ENCODE measurements at regions of chr6 and their contacts with region 1.

Region 1: GRCh38 chr6:145963216-145964068 is 716 bp downstream of the SHPRH start:
- DNase-seq: peak in 1 of 5 donors; percentile 58
- ATAC-seq: peak; percentile 24 to 63 (median 52)
- H3K4me3 ChIP-seq: peak overlapping the region; percentile 67 to 96 (median 80)
- H3K27ac ChIP-seq: peak overlapping the region; percentile 70 to 92 (median 88)
- H3K4me1 ChIP-seq: peaks cover 0 to 44% (median 30%) of the 10 kb centered on the region in 12 donors
- H3K27me3 ChIP-seq: no peaks in the 10 kb centered on the region
- CTCF ChIP-seq: no peak
- POLR2A ChIP-seq: no peak

Region 2: GRCh38 chr6:145734486-145735355 is 228.7 kb before region 1 on chr6:
- intact Hi-C with region 1: loop called in 2 of 10 experiments (anchors 5 to 10 kb)
- DNase-seq: peak; percentile 91 to 95 (median 94)
- ATAC-seq: peak; percentile 84 to 97 (median 92)
- H3K4me3 ChIP-seq: peak overlapping the region; percentile 43 to 87 (median 72)
- H3K27ac ChIP-seq: peak overlapping the region; percentile 90 to 99 (median 96)
- H3K4me1 ChIP-seq: peaks cover 0 to 38% (median 14%) of the 10 kb centered on the region in 12 donors
- H3K27me3 ChIP-seq: no peaks in the 10 kb centered on the region
- CTCF ChIP-seq: peak in 2 of 12 donors; percentile 3 to 8
- POLR2A ChIP-seq: peak in 1 of 2 donors; percentile 67

Region 3: DNA sequence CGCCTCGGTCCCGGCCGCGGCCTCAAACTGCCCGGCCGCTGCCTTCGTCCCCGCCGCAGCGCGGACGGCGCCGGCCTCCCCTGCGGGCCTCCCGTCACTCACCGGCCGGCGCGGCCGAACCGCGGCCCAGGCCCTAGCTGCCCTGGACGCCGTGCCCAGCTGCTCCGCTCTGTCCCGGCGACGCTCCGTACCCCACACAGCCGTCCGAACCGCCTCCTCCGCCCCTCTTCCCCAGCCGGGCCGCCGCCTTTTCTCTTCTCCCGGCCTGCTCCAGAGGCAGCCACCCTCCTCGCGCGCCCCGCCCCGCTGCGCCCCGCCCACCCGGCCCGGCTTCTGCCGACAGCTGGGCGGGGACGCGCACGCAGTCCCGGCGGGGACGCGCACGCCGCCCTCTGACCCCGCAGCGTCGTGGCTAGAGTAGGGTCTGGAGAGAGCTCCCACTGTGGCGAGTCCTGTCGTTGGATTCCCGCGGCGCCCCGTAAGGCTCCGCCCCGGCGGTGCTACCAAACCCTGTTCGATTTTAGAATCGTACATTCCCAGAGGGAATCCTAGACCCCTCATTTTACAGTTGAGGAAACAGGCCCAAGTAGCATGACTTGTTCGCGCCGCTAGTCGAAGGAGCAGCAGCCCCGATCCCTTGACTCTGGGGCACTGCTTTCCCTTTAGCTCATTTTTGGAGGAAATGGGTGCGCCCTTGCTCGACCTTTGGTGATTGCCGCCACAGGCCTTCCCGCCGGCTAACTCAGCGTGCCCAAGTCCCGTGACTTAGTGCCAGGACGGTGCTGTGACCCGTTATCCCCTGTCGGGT is 148.7 kb before region 1 on chr6 and contains the start of gene FBXO30:
- intact Hi-C with region 1: loop called in 4 of 10 experiments (anchors 5 to 10 kb)
- DNase-seq: peak; percentile 88 to 94 (median 90)
- ATAC-seq: peak; percentile 91 to 98 (median 97)
- H3K4me3 ChIP-seq: peak within 1 kb of the TSS; percentile 50 to 82 (median 72)
- H3K27ac ChIP-seq: peak within 1 kb of the TSS; percentile 87 to 97 (median 94)
- H3K4me1 ChIP-seq: peaks cover 0 to 58% (median 40%) of the 10 kb centered on the region in 12 donors
- H3K27me3 ChIP-seq: no peaks in the 10 kb centered on the region
- CTCF ChIP-seq: peak in 3 of 12 donors; percentile 7 to 26 (median 9)
- POLR2A ChIP-seq: peak; percentile 26 to 91
- total RNA-seq, gene FBXO30: 9.0 to 17.1 (median 14.4) TPM

Region 4: DNA sequence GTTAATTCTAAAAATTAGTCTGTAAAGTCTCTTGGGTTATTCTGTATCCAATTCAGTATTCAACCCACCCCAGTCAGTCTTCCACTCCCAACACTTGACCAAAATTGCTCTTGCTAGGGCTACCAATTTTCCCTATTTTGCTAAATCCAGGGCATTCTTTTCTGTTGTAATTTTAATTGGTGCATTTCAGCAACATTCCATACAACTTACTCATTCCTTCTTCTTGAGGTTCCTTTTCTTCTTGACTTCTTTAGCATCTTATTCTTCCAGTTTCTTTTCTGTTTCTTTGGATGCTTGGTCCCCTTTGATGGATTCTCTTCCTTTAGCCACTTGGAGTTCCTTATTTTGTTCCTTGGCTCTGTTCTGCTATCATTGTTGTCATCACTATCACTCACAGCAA is 54.2 kb after region 1 on chr6:
- intact Hi-C with region 1: no loop called
- DNase-seq: no peak
- ATAC-seq: no peak
- H3K4me3 ChIP-seq: no peak overlapping the region
- H3K27ac ChIP-seq: no peak overlapping the region
- H3K4me1 ChIP-seq: no peaks in the 10 kb centered on the region
- H3K27me3 ChIP-seq: peaks cover 0 to 2% (median 0%) of the 10 kb centered on the region in 9 donors
- CTCF ChIP-seq: no peak
- POLR2A ChIP-seq: no peak

Region 5: DNA sequence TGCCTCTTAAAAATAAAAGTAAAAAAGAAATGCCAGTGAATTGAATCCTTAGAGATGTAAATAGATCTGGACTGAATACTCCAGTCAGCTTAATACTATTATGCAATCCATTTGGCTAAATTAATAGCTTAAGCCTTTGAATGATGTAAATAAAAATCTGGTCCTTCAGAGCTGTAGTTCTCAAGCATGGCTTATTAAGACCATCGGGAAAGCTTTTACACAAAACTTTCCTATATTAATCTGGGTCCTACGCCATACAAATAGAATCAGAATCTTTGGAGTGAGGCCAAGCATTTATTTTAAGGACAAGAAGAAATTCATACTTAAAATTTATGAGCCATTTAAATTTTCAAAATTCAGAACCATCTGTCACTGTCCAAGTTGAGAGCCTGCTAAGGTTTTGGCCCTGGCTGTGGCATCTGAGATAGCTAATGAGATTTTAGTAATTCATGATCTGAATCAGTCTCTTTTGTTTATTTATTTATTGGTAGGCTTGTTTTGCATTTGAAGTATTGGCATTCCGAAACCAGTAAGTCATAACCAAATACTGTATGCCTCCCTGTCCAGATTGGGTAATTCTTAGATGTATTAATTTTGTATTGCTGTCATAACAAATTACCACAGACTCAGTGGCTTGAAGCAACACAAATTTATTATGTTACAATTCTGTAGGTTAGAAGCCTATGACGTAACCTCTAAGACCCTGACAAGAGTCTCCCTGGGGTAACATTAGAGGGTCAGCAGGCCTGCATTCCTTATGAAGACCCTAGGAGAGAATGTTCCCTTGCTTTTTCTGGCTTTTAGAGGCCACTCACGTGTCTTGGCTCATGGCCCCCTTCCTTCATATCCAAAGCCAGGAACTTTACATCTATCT is 352.2 kb after region 1 on chr6:
- intact Hi-C with region 1: no loop called
- DNase-seq: no peak
- ATAC-seq: no peak
- H3K4me3 ChIP-seq: no peak overlapping the region
- H3K27ac ChIP-seq: no peak overlapping the region
- H3K4me1 ChIP-seq: no peaks in the 10 kb centered on the region
- H3K27me3 ChIP-seq: no peaks in the 10 kb centered on the region
- CTCF ChIP-seq: no peak
- POLR2A ChIP-seq: no peak

Region 6: GRCh38 chr6:146543211-146543939 is 579.9 kb after region 1 on chr6 and contains the start of gene RAB32:
- intact Hi-C with region 1: loop called in 7 of 10 experiments (anchors 5 to 10 kb)
- DNase-seq: peak; percentile 95 to 97 (median 96)
- ATAC-seq: peak; percentile 97 to 100 (median 99)
- H3K4me3 ChIP-seq: peak within 1 kb of the TSS; percentile 63 to 88 (median 80)
- H3K27ac ChIP-seq: peak within 1 kb of the TSS; percentile 86 to 98 (median 94)
- H3K4me1 ChIP-seq: peaks cover 0 to 39% (median 19%) of the 10 kb centered on the region in 12 donors
- H3K27me3 ChIP-seq: no peaks in the 10 kb centered on the region
- CTCF ChIP-seq: peak; percentile 65 to 95 (median 80)
- POLR2A ChIP-seq: peak in 1 of 2 donors; percentile 74
- total RNA-seq, gene RAB32: 3.9 to 22.7 (median 7.7) TPM

Region 7: DNA sequence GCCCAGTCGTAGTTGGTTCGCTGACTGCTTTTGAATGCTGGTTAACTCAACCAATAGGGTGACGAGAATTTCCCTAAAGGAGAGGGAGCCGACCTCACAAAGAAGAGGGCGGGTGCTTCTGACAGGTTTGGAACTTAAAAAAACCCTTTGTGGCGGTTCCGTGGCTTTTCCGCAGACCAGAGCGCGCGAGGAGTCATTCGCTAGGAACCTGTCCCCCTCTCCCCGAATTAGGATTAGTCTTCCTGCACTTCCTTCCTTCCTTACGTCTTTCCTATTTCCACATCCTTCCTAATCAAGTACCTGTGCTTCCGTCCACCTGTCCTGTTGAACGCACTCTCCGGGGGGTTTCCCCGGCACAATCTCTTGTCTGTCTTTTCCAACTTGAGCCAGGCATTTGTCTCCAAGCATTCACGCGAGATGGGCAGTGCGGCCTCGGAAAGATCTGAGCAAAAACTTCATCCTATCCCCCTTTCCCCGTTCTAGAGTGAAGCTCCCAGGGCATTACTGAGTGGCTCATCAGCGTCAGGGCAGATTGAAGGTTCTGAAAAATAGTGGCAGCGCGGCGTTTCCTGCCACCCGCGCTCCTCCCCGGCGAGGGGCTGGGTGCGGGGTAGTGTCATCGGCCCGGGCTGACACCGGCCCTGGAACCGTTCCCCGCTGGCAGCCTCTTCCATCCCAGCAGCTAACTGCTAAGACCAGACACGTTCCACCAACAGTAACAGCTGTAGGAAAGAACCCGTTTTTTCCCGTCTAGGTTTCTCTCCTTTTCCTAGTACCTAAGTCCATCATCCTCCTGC is 1239.3 kb after region 1 on chr6:
- intact Hi-C with region 1: loop called in 1 of 10 experiments (anchors 10 kb)
- DNase-seq: peak; percentile 78 to 91 (median 87)
- ATAC-seq: peak; percentile 91 to 97 (median 94)
- H3K4me3 ChIP-seq: peak overlapping the region; percentile 80 to 94 (median 84)
- H3K27ac ChIP-seq: peak overlapping the region; percentile 89 to 97 (median 94)
- H3K4me1 ChIP-seq: peaks cover 0 to 38% (median 8%) of the 10 kb centered on the region in 12 donors
- H3K27me3 ChIP-seq: no peaks in the 10 kb centered on the region
- CTCF ChIP-seq: no peak
- POLR2A ChIP-seq: peak in 1 of 2 donors; percentile 78